HCT116 (cell line): ENCODE measurements at regions of chr1 and their contacts with region 1.

Region 1: DNA sequence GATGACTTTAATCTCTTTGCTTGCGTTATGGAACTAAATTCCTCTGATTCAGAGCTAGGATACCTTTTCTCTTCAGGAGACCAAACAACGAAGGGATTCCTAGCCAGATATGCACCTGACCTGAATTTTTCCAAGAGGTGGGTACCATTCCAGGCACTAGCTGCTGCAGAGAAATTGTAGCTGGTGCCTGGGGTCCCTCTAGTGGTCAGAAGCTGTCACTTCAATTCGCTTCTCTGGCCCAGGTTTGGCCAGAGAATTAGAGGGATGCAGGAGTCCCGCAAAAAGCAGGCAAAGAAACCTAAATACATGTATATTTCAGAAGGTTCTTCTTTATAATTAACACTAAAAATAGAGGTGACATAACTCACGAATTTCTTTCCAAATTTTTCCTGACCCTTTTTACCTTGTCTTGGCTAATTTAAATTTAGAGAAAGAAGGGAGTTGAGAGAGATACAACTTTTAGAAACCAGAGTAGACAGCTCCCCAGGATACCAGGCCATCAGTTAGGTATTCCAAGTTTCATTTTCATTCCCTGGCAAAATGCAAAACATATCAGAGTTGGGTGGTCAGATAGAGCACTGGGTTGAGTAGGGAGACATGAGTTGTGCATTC is 9.6 kb downstream of the ACKR1 start:
- DNase-seq: peak; percentile 10
- ATAC-seq: peak; percentile 86
- H3K4me3 ChIP-seq: no peak overlapping the region
- H3K27ac ChIP-seq: no peak overlapping the region
- H3K4me1 ChIP-seq: no peaks in the 10 kb centered on the region
- H3K27me3 ChIP-seq: peaks cover 4% of the 10 kb centered on the region; the same call in 1 of the 2 replicates
- CTCF ChIP-seq: peak; percentile 65 to 89 (median 84)
- POLR2A ChIP-seq: no peak
- RAD21 ChIP-seq: peak; percentile 61

Region 2: GRCh38 chr1:159132271-159132881 is 81.9 kb before region 1 on chr1:
- CTCF ChIA-PET with region 1: interaction called, 39 read pairs
- POLR2A ChIA-PET with region 1: no interaction called
- RAD21 ChIA-PET with region 1: interaction called, 3 read pairs
- intact Hi-C with region 1: loop called (anchors 1 kb)
- DNase-seq: peak; percentile 42
- ATAC-seq: peak; percentile 65
- H3K4me3 ChIP-seq: no peak overlapping the region
- H3K27ac ChIP-seq: no peak overlapping the region
- H3K4me1 ChIP-seq: no peaks in the 10 kb centered on the region
- H3K27me3 ChIP-seq: peaks cover 21% of the 10 kb centered on the region
- CTCF ChIP-seq: peak; percentile 73 to 85 (median 84)
- POLR2A ChIP-seq: no peak
- RAD21 ChIP-seq: peak; percentile 80

Region 3: DNA sequence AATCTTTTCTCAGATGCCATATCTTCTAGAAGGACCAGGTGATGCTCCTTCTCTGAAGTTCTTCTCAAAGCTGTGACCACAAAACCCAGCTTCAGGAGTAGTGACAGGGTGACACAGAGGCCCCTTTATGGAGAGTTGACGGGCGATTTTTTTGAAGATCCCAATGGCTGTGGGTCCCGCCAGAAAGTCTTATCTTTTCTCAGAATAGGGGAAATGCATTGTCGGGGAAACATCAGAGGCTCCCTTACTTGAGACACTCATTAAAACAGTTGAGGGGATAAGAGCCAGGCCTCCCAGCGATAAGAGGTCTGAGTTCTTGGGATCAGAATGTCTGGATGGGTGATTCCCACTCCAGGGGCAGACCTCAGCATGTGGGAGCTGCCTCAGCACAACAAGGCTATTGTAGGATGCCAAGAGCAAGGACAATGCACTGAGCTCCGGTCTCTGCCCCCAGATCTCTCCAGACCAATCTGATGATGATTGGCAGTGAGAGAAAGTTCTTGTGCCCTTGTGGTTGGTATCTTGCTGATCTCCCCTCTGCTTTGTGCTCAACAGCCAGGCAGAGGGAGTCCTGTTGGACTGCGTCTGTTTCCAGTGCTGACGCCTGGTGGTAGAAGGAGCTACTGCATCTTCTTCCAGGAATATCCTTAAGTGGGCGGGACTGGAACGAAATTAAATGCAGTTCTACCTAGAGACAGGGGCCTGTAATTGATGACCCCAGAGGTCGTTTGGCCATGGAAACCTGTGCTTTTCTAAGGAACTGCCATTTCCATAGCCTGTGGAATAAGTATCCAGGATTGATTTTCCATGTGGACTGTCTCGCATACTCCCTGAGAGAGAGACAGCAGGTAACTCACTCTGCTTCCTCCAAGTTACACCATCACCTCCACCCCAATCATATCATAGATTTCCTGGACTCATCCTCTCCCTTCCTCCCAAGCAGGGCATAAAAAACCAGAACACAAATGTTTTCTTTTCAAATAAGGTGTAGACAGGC is 16.4 kb before region 1 on chr1:
- CTCF ChIA-PET with region 1: interaction called, 14 read pairs
- POLR2A ChIA-PET with region 1: interaction called, 3 read pairs
- RAD21 ChIA-PET with region 1: no interaction called
- intact Hi-C with region 1: no loop called
- DNase-seq: peak; percentile 57
- ATAC-seq: peak; percentile 96
- H3K4me3 ChIP-seq: no peak overlapping the region
- H3K27ac ChIP-seq: no peak overlapping the region
- H3K4me1 ChIP-seq: no peaks in the 10 kb centered on the region
- H3K27me3 ChIP-seq: peaks cover 13% of the 10 kb centered on the region; the same call in 1 of the 2 replicates
- CTCF ChIP-seq: peak; percentile 83 to 95 (median 89)
- POLR2A ChIP-seq: no peak
- RAD21 ChIP-seq: peak; percentile 57